ENCODE measurements at regions of chr9 and their contacts with region 1.

Region 1: DNA sequence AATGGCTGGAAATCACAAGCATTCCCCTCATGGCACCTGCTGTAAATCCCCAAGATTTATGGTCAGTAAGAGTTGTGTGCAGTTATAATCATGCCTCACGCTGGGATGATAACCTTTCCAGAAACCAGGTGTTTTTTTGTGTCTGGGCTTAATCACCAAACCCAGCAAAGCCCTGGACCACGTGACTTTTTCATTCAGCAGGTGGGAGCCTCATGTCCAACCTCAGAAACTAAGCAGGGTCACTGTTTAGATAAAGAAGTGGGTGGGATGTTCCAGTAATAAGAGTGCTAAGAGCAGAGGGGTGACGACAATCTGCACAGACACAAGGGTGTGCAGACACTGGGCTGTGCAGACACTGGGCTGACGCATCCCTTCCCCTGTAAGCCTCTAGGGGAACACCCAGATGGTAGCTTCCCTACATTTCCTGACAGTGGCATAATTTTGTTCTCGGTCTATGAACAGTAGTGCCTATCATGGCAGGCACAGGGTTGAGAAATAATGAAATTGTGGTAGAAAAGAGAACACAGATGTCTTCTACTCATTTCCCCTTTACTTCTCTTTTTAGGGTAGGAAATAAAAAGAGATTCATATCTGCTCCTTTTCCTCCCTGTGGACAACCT is 85.1 kb downstream of the SAXO1 start:
- DNase-seq: no peak
- H3K4me3 ChIP-seq: no peak overlapping the region
- H3K27ac ChIP-seq: no peak overlapping the region
- H3K4me1 ChIP-seq: no peaks in the 10 kb centered on the region
- H3K27me3 ChIP-seq: peaks cover 2% of the 10 kb centered on the region
- CTCF ChIP-seq: no peak

Region 2: GRCh38 chr9:18874069-18874468 is 73.8 kb before region 1 on chr9:
- CTCF ChIA-PET with region 1: no interaction called
- dilution Hi-C with region 1: no loop called
- in situ Hi-C with region 1: no loop called
- intact Hi-C with region 1: no loop called
- DNase-seq: no peak
- H3K4me3 ChIP-seq: no peak overlapping the region
- H3K27ac ChIP-seq: no peak overlapping the region
- H3K4me1 ChIP-seq: no peaks in the 10 kb centered on the region
- H3K27me3 ChIP-seq: no peaks in the 10 kb centered on the region
- CTCF ChIP-seq: no peak

Region 3: GRCh38 chr9:18906656-18907395 is 41.1 kb before region 1 on chr9:
- CTCF ChIA-PET with region 1: no interaction called
- dilution Hi-C with region 1: loop called (anchors 5 kb)
- in situ Hi-C with region 1: no loop called
- intact Hi-C with region 1: no loop called
- DNase-seq: no peak
- H3K4me3 ChIP-seq: no peak overlapping the region
- H3K27ac ChIP-seq: no peak overlapping the region
- H3K4me1 ChIP-seq: no peaks in the 10 kb centered on the region
- H3K27me3 ChIP-seq: no peaks in the 10 kb centered on the region
- CTCF ChIP-seq: no peak

Region 4: DNA sequence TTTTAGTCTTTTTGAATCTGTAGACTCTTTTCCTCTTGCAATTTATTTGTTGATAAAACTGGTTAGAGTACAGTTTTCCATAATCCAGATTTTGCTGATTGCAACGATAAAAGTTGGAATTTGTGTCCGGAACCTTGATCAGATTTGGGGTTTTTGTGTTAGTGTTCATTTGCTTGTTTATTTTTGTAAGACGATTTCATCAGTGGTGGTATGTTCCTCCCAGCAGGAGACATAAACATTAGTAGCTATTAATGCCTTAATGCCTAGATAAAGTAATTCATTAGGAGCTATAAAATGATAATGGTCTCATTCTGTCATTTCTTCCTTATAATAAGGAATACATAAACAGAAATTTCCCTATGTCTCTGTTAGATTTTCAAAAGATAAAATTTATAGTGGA is 410.8 kb after region 1 on chr9:
- CTCF ChIA-PET with region 1: no interaction called
- dilution Hi-C with region 1: no loop called
- in situ Hi-C with region 1: no loop called
- intact Hi-C with region 1: no loop called
- DNase-seq: no peak
- H3K4me3 ChIP-seq: no peak overlapping the region
- H3K27ac ChIP-seq: no peak overlapping the region
- H3K4me1 ChIP-seq: no peaks in the 10 kb centered on the region
- H3K27me3 ChIP-seq: no peaks in the 10 kb centered on the region
- CTCF ChIP-seq: no peak